Activated naive CD4-positive, alpha-beta T cell treated with anti-CD3 and anti-CD28 coated beads for 36 hours (primary cell): ENCODE measurements at regions of chr4 and their contacts with region 1.

Region 1: DNA sequence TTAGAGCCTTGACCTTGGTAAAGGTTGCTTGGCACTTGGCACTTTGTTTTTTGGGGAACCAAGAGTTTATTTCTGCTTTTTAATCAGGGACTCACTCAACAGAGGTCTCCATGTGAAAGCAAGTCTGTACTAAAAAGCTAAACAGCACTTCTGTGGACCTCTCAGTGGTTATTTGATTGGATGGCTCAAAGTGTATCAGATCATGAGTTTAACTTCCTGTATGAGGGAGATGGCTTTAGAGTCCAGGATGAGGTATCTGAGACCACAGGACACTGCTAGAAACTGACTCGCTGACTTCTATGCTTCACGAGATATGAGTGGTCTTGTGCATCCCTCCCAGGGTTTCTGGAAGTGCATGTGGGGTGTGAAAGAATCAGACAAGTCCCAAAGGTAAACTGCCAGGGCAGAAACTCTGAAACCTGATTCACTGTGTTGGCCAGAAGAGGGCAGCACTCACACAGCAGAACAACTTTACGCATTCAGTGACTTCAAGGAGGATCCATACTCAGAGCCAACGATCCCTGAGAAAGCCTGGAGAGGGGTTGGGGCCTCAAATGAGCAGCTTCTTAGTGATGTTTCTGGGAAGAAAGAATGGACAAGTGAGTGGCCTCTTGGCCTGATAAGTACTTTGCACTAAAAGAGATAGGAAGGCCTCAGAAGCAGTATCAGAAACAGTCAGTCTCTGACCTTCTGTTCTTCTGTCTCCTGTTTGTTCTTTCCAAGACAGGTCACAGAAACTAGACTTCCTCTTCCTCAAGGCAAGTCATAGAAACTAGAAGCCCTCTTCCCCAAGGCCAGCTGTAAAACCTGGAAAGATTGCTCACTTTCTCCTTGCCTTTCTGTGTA is 220.3 kb upstream of the CXCL13 start:
- DNase-seq: peak; percentile 78
- H3K4me3 Mint-ChIP-seq: no peak overlapping the region
- H3K27ac Mint-ChIP-seq: no peak overlapping the region
- H3K4me1 Mint-ChIP-seq: no peaks in the 10 kb centered on the region
- H3K27me3 Mint-ChIP-seq: no peaks in the 10 kb centered on the region

Region 2: GRCh38 chr4:77367638-77368037 is 17.7 kb before region 1 on chr4:
- CTCF ChIA-PET with region 1: interaction called, 15 read pairs
- intact Hi-C with region 1: no loop called
- DNase-seq: no peak
- H3K4me3 Mint-ChIP-seq: no peak overlapping the region
- H3K27ac Mint-ChIP-seq: no peak overlapping the region
- H3K4me1 Mint-ChIP-seq: no peaks in the 10 kb centered on the region
- H3K27me3 Mint-ChIP-seq: peaks cover 4% of the 10 kb centered on the region

Region 3: DNA sequence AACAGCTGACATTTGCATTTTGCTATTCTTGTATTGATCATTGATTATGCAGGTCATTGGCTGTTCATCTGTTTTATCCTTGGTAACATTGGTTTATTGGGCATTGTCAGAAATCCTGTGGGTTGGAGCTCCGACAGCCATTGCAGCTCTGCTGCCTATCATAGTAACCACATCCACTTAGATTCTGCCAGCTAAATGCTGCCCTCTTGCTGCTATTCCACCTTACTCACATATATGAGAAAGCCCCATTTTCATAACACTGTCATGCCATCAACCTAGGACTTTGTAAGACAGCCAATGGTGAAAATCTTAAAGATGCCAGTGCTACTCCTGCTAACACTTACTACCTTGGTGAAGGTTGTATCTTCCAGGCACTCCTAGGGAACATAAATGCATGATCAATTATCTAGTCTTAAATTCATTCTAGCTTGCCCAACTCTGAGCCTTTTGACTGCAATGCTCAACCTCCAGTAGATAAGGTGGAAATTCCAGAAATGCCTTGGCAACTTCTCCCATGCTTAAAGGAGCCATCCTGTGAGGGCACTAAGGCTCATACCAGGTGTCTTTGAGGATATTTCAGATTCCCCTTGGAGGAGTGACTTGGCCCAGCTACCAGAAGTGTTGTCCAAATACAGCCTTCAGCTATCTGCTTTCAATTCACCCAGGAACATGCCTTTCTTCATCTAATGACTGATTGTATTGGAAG is 33.1 kb after region 1 on chr4:
- CTCF ChIA-PET with region 1: interaction called, 12 read pairs
- intact Hi-C with region 1: loop called (anchors 1 kb)
- DNase-seq: peak; percentile 43
- H3K4me3 Mint-ChIP-seq: no peak overlapping the region
- H3K27ac Mint-ChIP-seq: no peak overlapping the region
- H3K4me1 Mint-ChIP-seq: no peaks in the 10 kb centered on the region
- H3K27me3 Mint-ChIP-seq: peaks cover 3% of the 10 kb centered on the region

Region 4: DNA sequence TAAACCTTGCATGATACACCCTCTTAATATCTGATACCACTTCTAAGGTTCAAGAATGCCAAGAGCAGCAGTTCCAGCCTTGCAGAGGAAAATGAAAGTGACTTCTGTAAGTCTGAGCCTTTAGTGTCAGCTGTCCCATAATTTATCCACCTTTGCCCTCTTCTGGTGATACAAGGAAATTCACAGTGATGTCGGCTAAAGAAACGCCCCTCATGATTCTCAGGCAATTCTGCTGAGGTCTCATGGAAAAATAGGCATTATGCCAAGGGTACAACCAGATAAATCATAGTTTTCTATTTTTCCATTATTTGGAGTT is 48.0 kb after region 1 on chr4:
- CTCF ChIA-PET with region 1: interaction called, 60 read pairs
- intact Hi-C with region 1: loop called (anchors 1 kb)
- DNase-seq: peak; percentile 39
- H3K4me3 Mint-ChIP-seq: no peak overlapping the region
- H3K27ac Mint-ChIP-seq: no peak overlapping the region
- H3K4me1 Mint-ChIP-seq: peaks cover 13% of the 10 kb centered on the region
- H3K27me3 Mint-ChIP-seq: no peaks in the 10 kb centered on the region

Region 5: DNA sequence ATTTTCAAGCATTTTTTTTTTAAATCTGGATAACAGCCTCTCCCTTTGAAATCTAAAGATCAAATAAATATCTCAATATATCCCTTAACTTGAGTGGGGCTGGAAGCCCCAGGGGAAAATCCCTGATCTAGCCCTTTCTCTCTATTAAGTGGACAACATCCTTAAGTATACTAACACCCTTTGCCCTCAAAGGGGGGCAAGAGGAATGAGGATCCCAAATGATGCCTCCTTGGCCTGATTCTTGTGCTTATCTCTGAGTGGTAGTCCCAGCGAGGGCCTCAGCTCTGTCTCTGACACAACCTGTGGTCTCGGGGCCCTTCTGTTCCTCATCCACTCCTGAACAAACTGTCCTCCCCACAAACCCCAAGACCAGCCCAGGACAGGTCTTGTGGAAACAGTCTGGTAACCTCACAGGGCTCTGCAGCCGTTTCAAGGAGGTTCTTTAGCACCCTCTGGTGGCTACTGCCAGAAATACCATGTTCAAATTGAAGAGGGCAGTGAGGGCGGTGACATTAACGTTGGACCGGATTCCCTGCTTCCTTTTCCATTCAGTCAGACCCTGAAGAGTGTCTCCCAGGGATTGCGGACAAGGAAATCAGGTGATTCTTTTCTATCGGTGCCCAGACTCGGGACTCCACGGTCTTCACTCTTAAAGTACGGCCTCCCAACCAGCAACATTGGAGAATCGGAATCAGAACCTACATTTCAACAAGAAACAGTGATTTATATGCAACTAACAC is 233.2 kb after region 1 on chr4:
- CTCF ChIA-PET with region 1: interaction called, 20 read pairs
- intact Hi-C with region 1: loop called (anchors 1 kb)
- DNase-seq: peak; percentile 81
- H3K4me3 Mint-ChIP-seq: no peak overlapping the region
- H3K27ac Mint-ChIP-seq: no peak overlapping the region
- H3K4me1 Mint-ChIP-seq: peaks cover 2% of the 10 kb centered on the region
- H3K27me3 Mint-ChIP-seq: peaks cover 12% of the 10 kb centered on the region

Region 6: GRCh38 chr4:77697860-77698590 is 312.7 kb after region 1 on chr4:
- CTCF ChIA-PET with region 1: no interaction called
- intact Hi-C with region 1: loop called (anchors 5 kb)
- DNase-seq: peak; percentile 27
- H3K4me3 Mint-ChIP-seq: no peak overlapping the region
- H3K27ac Mint-ChIP-seq: no peak overlapping the region
- H3K4me1 Mint-ChIP-seq: no peaks in the 10 kb centered on the region
- H3K27me3 Mint-ChIP-seq: peaks cover 2% of the 10 kb centered on the region